GM13976 (cell line): ENCODE measurements at regions of chr11 and their contacts with region 1.

Region 1: GRCh38 chr11:128630367-128631230 is 43.2 kb upstream of the ETS1 start:
- DNase-seq: peak; percentile 77
- CTCF ChIP-seq: peak; percentile 88

Region 2: DNA sequence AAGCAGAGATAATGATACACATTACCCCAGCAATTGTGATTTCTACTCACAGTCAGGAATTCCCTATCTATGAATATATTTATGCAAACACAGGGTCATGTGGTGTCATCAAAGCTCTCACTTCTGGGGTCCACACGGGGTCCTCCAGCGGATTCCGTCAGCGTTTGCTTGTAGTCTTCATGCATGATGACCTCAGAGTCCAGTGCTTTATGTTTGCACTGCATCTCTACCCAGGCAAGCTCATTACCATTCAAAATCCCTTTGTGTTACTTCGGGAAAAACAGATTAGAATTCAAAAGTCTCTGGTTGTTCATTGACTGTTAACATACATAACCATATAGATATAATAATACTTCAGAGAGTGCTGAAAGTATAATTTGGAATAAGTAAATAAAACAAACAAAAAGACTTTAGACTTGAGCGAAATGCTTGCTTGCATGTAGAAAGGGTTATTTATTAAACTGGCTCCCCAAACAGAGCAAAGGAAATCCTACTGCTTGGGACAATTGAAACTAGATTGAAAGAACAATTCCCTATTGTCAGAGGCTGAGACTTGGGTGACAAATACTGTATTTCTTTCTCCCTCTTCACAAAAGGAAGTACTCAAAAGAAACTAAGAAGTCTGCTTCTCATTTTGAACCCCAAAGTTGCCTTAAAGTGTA is 466.4 kb before region 1 on chr11:
- in situ Hi-C with region 1: loop called (anchors 5 kb)
- DNase-seq: no peak
- CTCF ChIP-seq: no peak

Region 3: DNA sequence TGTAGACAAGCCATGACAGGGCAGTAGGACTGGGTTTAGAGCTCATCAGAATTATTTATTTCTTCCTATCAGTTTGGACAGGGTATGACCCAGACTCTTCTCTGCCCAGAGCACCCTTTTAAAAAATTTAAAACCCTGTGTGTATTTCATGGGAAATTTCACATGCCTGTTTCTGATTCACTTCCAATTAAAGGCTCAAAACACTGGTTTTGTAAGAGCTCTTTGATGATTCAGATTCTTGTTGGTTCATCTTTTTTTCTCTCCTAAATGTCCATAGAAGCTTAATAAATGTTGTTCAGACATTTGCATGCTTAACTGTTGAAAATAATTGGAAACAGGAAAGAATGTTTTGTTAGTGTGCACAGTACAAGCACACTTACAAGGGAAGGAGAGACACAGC is 77.1 kb after region 1 on chr11:
- in situ Hi-C with region 1: no loop called
- DNase-seq: no peak
- CTCF ChIP-seq: no peak

Region 4: DNA sequence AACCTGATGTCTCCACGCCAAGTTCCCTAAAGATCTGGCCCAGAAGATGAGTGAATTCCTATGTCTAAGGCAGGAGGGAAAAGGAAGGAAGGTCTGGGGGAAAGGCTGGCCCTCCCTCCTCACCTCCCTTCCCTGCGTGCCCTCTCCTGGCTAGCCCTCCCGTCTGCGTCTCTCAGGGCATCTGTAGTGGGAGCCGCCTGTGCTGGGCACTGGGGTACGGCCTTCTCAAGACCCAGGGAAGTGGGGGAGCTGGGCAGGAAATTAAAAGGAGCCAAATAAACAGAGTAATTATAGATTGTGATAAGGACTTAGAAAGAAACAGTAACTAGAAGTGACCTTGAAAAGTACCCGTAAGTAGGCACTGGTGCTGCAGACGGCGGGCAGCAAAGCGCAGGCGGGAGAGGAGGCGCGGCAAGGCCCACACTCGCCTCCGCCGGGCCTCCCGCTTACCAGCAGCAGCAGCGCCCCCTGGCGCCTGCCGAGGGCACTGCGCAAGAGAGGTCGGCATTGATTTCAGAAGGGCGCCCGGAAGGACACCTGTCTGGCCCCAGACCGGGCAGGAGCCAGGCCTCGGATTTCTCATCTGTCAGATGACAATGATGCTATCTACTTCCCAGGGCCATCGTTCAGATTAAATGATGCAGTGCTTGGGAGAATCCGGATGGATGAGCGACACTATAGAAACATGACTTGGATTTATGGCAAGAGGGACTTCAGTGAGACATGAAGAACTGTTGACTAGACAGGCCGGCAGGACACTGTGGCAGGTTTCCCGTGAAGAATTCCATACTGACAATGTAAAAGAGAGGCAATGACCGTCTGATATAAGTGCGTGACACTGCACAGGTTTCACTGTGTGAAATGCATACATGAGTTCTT is 229.2 kb after region 1 on chr11:
- in situ Hi-C with region 1: loop called (anchors 10 kb)
- DNase-seq: peak; percentile 89
- CTCF ChIP-seq: peak; percentile 93

Region 5: DNA sequence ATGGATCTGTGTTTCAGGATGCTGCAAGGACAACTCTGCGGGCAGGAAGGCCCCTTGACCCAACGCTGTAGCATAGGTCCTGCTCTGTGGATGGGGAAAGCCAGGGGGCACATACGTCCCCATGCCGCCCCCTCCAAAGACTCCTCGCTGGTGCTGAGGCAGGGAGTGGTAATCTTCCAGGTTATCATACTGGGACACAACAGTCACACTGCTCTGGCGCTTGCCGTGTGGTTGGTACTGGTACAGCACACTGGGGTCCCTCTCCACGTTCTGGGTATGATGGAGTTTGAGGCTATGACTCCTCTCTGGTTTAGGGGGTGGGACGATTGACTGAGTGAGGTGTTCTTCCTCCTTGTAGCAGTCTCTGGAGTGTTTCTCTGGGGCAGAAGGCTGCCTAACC is 338.3 kb after region 1 on chr11:
- in situ Hi-C with region 1: no loop called
- DNase-seq: no peak
- CTCF ChIP-seq: no peak